WTC11 (cell line): ENCODE measurements at regions of chr19 and their contacts with region 1.

Region 1: GRCh38 chr19:49889687-49890348 is 6.9 kb downstream of the IL4I1 start:
- DNase-seq: peak; percentile 89
- ATAC-seq: peak; percentile 76
- H3K4me3 Mint-ChIP-seq: peak overlapping the region; percentile 73
- H3K27ac Mint-ChIP-seq: peak overlapping the region; percentile 95; the same call in 1 of the 2 replicates
- H3K4me1 Mint-ChIP-seq: peaks cover 11% of the 10 kb centered on the region
- H3K27me3 Mint-ChIP-seq: peaks cover 43% of the 10 kb centered on the region
- CTCF ChIP-seq: peak; percentile 66; the same call in 1 of the 2 replicates

Region 2: GRCh38 chr19:49856574-49857021 is 33.2 kb before region 1 on chr19:
- CTCF ChIA-PET with region 1: no interaction called
- POLR2A ChIA-PET with region 1: no interaction called
- DNase-seq: no peak
- ATAC-seq: no peak
- H3K4me3 Mint-ChIP-seq: no peak overlapping the region
- H3K27ac Mint-ChIP-seq: no peak overlapping the region
- H3K4me1 Mint-ChIP-seq: peaks cover 23% of the 10 kb centered on the region
- H3K27me3 Mint-ChIP-seq: peaks cover 3% of the 10 kb centered on the region; the same call in 1 of the 2 replicates
- CTCF ChIP-seq: no peak

Region 3: DNA sequence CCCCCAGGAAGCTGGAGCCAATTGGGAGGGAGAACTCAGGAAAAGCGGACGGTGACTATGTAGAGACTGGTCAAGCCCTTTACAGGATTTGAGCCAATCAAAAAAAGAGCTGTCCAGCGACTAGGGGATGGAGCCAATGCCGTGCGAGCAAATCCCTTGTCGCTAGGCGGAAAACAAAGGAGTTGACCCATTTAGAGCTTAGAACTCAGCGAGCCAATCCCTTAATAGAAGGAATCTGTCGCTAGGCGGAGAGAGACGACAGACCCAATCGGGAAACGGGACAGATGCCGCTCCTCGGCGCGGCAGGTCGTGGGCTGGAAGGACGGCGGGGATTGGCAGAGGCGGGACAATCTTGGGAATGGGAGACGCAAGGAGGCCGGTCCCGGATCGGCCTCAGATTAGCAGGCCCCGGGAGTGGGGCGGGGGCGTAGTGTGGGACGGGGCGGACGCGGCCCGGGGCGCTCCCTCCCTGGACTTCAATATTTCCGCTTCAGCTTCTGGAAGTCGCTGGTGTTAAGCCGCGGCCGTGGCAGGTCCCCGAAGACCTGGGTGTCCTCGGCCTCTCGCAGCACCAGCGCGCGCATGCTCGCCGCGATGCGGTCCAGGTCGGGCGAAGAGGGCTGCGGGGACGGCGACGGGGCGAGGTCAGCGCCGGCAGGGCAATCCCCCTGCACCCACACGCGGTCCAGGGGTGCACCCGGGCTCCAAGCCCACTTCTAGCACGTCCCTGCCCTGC is 20.2 kb before region 1 on chr19:
- CTCF ChIA-PET with region 1: interaction called, 11 read pairs
- POLR2A ChIA-PET with region 1: interaction called, 13 read pairs
- DNase-seq: peak; percentile 97
- ATAC-seq: peak; percentile 82
- H3K4me3 Mint-ChIP-seq: no peak overlapping the region
- H3K27ac Mint-ChIP-seq: peak overlapping the region; percentile 96; the same call in 1 of the 2 replicates
- H3K4me1 Mint-ChIP-seq: peaks cover 25% of the 10 kb centered on the region
- H3K27me3 Mint-ChIP-seq: no peaks in the 10 kb centered on the region
- CTCF ChIP-seq: no peak

Region 4: DNA sequence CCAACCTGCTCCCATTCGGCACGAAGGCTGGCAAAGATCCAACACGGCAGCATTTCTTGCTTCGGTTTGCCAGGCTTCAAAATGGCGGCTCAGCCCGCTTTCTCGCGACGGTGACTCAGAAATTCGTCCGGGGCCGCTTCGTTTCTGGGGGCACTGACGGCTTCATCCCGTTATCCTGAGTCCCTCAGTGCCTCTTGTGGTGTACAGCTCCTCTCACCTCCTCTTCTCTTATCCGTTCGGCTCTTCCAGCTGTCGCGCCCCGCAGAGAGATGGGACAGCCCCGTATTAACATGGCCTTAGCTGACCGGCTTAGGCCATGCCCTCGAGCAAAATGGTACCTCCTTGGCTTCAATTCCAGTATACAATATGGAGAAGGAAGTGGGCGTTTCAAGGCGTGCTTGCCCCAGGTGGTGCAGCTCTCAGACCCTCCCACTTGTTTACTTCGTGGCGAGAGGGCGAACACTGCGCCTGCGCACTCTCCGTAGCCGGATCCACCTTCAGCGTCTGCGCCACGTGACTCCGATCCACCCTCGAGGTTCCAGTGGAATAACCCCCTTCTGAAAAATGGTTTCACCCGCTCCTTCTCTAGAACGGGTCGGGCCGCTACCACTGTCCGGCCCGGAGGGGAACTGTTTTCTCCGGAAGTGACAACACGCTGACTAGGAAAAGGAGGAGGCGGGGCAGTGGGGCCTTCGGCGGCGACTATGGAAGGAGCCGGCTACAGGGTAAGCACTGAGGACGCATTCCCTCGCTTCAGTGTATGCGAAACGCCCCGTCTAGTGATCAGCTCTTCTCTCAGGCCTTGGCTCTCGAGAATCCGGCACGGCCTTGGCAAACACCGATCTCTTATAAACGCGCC is 12.6 kb before region 1 on chr19 and contains the starts of genes AKT1S1 and TBC1D17:
- CTCF ChIA-PET with region 1: interaction called, 12 read pairs
- POLR2A ChIA-PET with region 1: interaction called, 6 read pairs
- DNase-seq: peak; percentile 99
- ATAC-seq: peak; percentile 64
- H3K4me3 Mint-ChIP-seq: no peak within 1 kb of the TSS
- H3K27ac Mint-ChIP-seq: peak within 1 kb of the TSS; percentile 100
- H3K4me1 Mint-ChIP-seq: peaks cover 23% of the 10 kb centered on the region
- H3K27me3 Mint-ChIP-seq: no peaks in the 10 kb centered on the region
- CTCF ChIP-seq: no peak
- total RNA-seq, gene AKT1S1: 41.9 to 47.8 TPM (median 46.5 TPM) in 3 replicates
- total RNA-seq, gene TBC1D17: 44.4 to 52.8 TPM (median 46.7 TPM) in 3 replicates

Region 5: GRCh38 chr19:49912965-49913685 is 23.3 kb after region 1 on chr19:
- CTCF ChIA-PET with region 1: interaction called, 18 read pairs
- POLR2A ChIA-PET with region 1: interaction called, 3 read pairs
- DNase-seq: peak; percentile 66
- ATAC-seq: peak; percentile 86
- H3K4me3 Mint-ChIP-seq: no peak overlapping the region
- H3K27ac Mint-ChIP-seq: peak overlapping the region; percentile 75; the same call in 1 of the 2 replicates
- H3K4me1 Mint-ChIP-seq: peaks cover 8% of the 10 kb centered on the region
- H3K27me3 Mint-ChIP-seq: no peaks in the 10 kb centered on the region
- CTCF ChIP-seq: no peak; the same call in 1 of the 2 replicates

Region 6: DNA sequence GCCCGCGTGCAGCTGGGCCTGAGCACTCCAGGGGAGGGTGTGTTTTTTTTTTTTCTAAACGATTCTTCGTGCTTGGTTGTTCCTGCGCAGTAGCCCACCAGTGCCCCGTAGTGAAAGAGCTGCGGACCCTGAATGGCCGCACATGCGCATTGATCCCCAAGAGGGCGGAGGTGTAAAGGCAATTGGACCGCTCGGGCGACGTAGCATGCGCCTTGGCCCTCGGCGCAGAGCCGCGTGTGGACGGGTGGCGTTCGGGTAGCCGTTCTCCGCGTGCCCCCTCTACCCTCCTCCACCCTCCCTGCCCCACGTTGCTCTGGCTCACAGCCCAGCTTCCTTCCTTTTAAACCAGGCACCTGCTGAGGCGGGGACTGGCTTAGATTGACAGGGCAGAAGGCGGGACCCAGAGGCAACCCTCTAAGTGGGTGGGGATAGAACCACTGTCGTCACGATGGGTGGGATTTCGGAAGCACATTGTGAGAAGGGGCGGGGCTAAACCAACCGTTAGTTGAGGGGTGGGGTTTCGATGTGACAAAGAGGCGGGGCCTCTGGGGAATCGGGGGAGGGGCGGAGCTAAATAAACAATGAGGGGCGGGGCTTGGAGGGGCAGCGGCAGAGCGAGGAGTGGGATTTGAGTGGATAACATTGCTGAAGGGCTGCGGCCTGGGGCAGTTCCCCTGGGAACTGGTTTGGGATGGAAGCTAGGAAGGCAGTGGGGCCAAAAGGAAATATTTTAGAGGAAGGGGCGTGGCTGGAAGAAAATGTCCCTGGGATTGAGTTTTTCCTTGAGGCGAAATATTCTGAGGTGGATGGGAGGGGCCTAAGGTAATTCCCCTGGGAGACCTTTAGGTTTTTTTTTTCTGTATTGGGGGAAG is 40.0 kb after region 1 on chr19:
- CTCF ChIA-PET with region 1: interaction called, 7 read pairs
- POLR2A ChIA-PET with region 1: interaction called, 11 read pairs
- DNase-seq: peak; percentile 97
- ATAC-seq: peak; percentile 87
- H3K4me3 Mint-ChIP-seq: peak overlapping the region; percentile 99
- H3K27ac Mint-ChIP-seq: peak overlapping the region; percentile 99
- H3K4me1 Mint-ChIP-seq: peaks cover 25% of the 10 kb centered on the region
- H3K27me3 Mint-ChIP-seq: peaks cover 4% of the 10 kb centered on the region; the same call in 1 of the 2 replicates
- CTCF ChIP-seq: no peak